ENCODE measurements at regions of chr2 and their contacts with region 1.

Region 1: DNA sequence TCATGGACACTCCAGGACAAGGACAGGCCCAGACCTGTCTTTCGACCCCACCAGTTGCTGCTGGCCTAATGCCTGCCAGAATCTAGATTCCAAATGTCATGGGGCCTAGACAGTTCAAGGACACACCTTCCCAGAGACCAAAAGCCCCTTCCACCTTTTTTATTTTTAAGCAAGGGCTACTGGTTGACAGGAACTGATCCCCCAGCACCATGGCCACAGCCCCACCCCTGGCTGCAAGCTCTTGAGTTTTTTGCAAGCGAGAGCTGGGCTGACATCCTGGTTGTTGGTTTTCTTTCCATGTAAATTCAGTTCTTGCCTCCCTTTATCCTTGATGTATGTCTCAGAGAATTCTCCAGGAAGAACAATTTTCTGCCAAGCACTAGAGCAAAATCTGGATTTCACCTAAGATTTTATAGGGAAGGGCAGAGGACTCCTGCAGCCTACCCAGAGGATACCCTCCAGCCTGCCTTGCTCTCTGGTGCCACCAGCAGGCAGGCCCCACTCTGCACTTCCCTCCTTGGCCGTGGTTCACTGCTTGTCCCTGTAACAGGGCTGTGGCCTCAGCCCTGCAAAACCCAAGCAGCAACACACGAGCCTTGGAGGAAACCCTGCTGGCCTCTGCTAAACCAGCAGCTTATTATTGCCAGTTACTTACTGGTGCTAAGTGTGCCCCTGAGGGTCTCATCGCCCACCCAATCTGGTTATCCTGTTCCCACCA is 97.7 kb downstream of the TWIST2 start:
- DNase-seq: peak; percentile 29
- ATAC-seq: peak; percentile 95
- H3K4me3 ChIP-seq: no peak overlapping the region
- H3K27ac ChIP-seq: no peak overlapping the region
- H3K4me1 ChIP-seq: no peaks in the 10 kb centered on the region
- H3K27me3 ChIP-seq: peaks cover 15 to 66% of the 10 kb centered on the region in 2 experiments
- CTCF ChIP-seq: peak; percentile 81
- EP300 ChIP-seq: no peak
- POLR2A ChIP-seq: no peak
- RAD21 ChIP-seq: peak; percentile 61

Region 2: DNA sequence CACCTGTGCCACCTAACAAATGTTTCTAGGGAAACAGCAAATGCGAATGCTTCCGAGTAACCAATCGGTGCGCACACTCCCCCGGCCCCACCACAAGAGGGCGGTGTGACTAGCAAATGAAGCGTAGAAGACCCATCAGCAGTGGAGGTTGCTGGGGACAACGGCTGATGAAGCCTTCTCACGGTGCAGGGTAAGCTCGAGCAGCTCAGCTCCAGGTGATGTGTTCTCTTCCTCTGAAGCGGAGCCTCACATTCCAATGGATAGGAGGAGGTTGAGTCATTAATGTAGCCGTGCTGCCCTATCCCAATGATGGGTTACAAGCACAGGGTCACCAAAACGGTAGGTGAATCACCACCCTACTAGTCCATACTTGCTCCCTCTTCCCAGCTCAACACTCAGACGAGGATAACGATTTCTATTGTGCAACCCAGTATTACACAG is 225.3 kb before region 1 on chr2:
- CTCF ChIA-PET with region 1: interaction called, 3 read pairs
- POLR2A ChIA-PET with region 1: no interaction called
- in situ Hi-C with region 1: no loop called
- intact Hi-C with region 1: loop called (anchors 5 kb)
- DNase-seq: peak; percentile 58
- ATAC-seq: peak; percentile 98
- H3K4me3 ChIP-seq: no peak overlapping the region
- H3K27ac ChIP-seq: no peak overlapping the region
- H3K4me1 ChIP-seq: no peaks in the 10 kb centered on the region
- H3K27me3 ChIP-seq: peaks cover under 1 to 24% of the 10 kb centered on the region in 2 experiments; a peak in 4 of 5 replicates
- CTCF ChIP-seq: peak; percentile 95
- EP300 ChIP-seq: no peak
- POLR2A ChIP-seq: no peak
- RAD21 ChIP-seq: peak; percentile 73

Region 3: DNA sequence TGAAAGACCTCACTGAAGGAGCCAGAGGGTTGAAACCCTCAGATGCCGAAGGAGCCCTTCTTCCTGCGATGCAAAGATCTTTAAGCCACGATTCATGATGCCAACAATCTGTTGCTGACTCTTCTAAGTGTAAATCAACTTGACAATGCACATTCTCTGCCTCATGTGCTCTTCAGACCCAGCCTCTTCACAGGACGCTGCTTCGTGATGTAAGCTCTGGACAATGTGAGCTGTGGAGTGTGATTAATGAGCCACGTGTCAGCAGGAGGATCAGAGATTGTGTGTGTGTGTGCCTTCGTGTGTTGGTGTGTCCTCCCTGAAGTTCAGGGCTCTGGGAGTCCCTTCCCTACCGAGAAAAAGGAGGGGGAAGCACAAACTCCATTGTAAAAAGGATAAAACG is 124.2 kb before region 1 on chr2:
- CTCF ChIA-PET with region 1: no interaction called
- POLR2A ChIA-PET with region 1: no interaction called
- in situ Hi-C with region 1: no loop called
- intact Hi-C with region 1: loop called (anchors 5 kb)
- DNase-seq: no peak
- ATAC-seq: no peak
- H3K4me3 ChIP-seq: no peak overlapping the region
- H3K27ac ChIP-seq: no peak overlapping the region
- H3K4me1 ChIP-seq: no peaks in the 10 kb centered on the region
- H3K27me3 ChIP-seq: peaks cover 0 to 36% of the 10 kb centered on the region in 2 experiments; a peak in 3 of 5 replicates
- CTCF ChIP-seq: no peak
- EP300 ChIP-seq: no peak
- POLR2A ChIP-seq: no peak
- RAD21 ChIP-seq: no peak